H1 (cell line): ENCODE measurements at regions of chr11 and their contacts with region 1.

Region 1: DNA sequence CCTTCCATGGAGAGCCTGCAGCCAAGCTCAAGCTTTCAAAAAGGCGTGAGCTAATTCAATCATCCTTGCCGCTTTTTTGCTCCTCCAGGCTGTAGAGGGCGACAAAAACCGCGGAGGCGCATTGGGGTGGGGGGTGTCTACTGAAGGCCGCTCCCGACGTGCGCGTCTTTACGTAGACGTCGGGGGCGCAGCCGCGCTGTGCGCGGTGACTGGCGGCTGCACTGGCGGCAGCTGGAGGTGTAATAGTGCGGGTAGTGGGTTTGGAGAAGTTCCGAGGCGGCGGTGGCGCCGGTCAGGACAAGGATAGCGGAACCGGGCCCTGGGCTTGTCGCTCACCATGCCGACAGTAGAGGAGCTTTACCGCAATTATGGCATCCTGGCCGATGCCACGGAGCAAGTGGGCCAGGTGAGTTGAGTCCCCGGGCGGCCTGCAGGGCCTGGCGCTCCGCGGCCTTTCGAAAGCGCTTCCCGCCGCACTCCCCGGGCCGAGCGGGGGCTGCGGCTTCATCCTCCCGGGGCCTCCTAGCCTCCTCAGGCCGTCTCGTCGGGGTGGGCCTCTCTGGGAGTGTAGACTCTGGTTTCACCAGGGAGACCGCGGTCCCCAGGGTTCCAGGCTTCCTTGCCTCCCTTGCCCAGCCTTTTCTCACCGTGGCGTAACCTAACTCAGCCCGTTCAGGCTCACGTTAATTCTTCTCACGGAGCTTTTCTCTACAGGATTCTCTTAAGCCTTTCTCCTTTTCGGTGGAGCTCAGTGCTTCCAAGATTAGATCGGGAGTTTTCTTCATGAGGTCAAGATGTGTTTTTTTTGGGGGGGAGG is at the start of gene API5:
- DNase-seq: peak; percentile 90 to 93
- H3K4me3 ChIP-seq: peak within 1 kb of the TSS; percentile 81 to 93 (median 86)
- H3K27ac ChIP-seq: peak within 1 kb of the TSS; percentile 78
- H3K4me1 ChIP-seq: 0 out of 7 replicates have a peak, but pooled peaks cover 0 to 1% (median 0%) of the 10 kb centered on the region in 4 experiments
- H3K27me3 ChIP-seq: no peaks in the 10 kb centered on the region
- CTCF ChIP-seq: peak; percentile 62 to 81 (median 80)
- EP300 ChIP-seq: peak in 1 of 2 experiments; percentile 51; a peak in 1 of 3 replicates
- POLR2A ChIP-seq: peak; percentile 70 to 88
- RAD21 ChIP-seq: peak; percentile 30 to 44; a peak in 3 of 4 replicates
- total RNA-seq, gene API5: 155 and 158 TPM in 2 replicates

Region 2: GRCh38 chr11:43245466-43245865 is 66.5 kb before region 1 on chr11:
- CTCF ChIA-PET with region 1: no interaction called
- POLR2A ChIA-PET with region 1: no interaction called
- DNase-seq: no peak
- H3K4me3 ChIP-seq: no peak overlapping the region
- H3K27ac ChIP-seq: no peak overlapping the region
- H3K4me1 ChIP-seq: no peaks in the 10 kb centered on the region
- H3K27me3 ChIP-seq: no peaks in the 10 kb centered on the region
- CTCF ChIP-seq: no peak
- EP300 ChIP-seq: no peak
- POLR2A ChIP-seq: no peak
- RAD21 ChIP-seq: no peak

Region 3: GRCh38 chr11:43298397-43298796 is 13.6 kb before region 1 on chr11:
- CTCF ChIA-PET with region 1: interaction called, 15 read pairs
- POLR2A ChIA-PET with region 1: interaction called, 3 read pairs
- DNase-seq: no peak
- H3K4me3 ChIP-seq: no peak overlapping the region
- H3K27ac ChIP-seq: no peak overlapping the region
- H3K4me1 ChIP-seq: no peaks in the 10 kb centered on the region
- H3K27me3 ChIP-seq: no peaks in the 10 kb centered on the region
- CTCF ChIP-seq: no peak
- EP300 ChIP-seq: no peak
- POLR2A ChIP-seq: no peak
- RAD21 ChIP-seq: no peak

Region 4: DNA sequence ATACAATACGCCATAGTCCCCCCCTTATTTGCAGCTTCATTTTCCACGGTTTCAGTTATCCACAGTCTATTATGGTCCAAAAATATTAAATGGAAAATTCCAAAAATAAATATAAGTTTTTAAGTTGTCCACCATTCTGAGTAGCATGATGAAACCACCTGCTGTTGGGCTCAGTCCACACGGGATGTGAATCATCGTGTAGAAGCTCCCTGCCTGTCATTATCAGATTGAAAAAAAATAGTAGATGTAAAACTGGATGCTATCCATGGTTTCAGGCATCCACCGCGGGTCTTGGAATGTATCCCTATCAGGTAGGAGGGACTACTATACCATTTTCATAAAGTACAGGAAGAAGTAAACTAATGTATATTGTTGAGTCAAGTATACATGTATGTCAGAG is 174.1 kb after region 1 on chr11:
- CTCF ChIA-PET with region 1: no interaction called
- POLR2A ChIA-PET with region 1: no interaction called
- DNase-seq: no peak
- H3K4me3 ChIP-seq: no peak overlapping the region
- H3K27ac ChIP-seq: no peak overlapping the region
- H3K4me1 ChIP-seq: no peaks in the 10 kb centered on the region
- H3K27me3 ChIP-seq: no peaks in the 10 kb centered on the region
- CTCF ChIP-seq: no peak
- EP300 ChIP-seq: no peak
- POLR2A ChIP-seq: no peak
- RAD21 ChIP-seq: no peak